ENCODE measurements at regions of chr9 and their contacts with region 1.

Region 1: GRCh38 chr9:23477908-23478307 is 348.1 kb downstream of the ELAVL2 start:
- DNase-seq: no peak
- ATAC-seq: no peak

Region 2: GRCh38 chr9:23447166-23447565 is 30.7 kb before region 1 on chr9:
- intact Hi-C with region 1: no loop called
- DNase-seq: no peak
- ATAC-seq: no peak

Region 3: DNA sequence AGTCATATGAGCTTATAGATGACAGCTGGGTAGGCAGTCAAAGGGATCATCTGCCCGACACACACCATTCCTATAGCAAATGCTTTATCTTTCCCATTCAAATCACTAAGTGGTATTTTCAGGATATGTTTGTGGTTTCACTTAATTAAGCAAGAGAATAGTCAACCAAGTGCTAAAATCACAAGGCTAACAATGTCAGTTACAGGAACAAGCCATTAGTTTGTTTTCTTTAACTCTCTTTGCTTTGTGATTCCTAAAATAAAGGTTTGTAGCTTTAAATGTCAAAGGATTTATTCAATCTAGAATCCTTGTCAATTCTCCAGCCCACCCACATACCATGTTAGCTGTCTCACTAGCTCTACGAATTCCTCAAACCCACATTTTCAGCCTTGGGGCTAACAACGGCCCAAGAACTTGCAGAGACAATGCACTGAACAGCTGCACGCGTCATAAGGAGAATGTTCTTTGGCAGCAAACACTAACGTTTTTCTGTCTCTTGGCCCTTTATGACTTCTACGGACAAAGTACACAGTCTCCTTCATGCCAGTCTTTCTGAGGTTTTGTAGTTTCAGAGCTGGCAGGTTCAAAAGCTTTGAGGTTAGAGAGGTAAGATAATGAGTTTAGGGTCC is 291.5 kb after region 1 on chr9:
- intact Hi-C with region 1: loop called (anchors 10 kb)
- DNase-seq: no peak
- ATAC-seq: no peak

Measured in Right ventricle myocardium inferior (tissue), 1 donor.